Activated CD8-positive, alpha-beta memory T cell treated with anti-CD3 and anti-CD28 coated beads, Interleukin-2, amount 10 ng/mL, durations not matched to agents 7 days and 5 days (primary cell): ENCODE measurements at regions of chr11 and their contacts with region 1.

Region 1: DNA sequence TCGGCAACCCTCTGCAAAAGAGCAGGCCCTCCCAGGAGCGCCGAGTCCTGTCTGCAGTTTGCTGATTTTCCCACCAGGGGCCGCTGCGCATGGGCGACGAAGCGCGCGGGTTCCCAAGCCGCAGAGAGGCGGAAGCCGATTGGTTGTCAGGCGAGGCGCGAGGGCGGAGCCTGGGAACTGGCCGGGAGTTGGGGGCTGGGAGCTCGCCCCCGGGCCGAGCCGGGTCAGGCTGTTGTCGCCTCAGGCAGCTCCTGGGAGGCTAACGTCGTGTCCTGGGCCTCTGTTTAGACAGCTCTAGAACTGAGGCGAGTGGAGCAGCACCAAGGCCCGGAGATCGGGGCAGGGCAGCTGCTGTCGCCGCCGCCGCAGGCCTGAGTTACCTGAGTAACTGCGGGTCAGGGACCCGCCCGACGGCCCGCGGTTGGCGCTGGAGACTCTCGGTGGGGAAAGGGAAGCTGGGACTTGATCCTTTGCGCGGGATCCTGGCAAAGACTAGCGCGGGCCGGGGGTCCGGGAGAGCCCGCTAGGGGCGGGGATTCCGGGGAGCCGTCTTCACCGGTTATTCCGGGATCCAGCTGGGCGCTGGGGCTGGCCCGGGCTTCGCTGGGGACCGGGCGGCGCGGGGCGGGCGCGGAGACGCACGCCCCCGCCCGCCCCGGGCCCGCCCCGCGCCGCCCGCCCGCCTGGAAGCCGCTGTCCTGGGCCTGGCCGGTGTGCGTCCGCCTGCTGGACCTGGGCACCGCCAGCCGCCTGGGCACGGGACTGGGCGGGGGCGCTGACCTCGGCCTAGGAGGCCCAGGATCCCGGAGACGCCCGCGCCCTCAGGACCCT is at the start of gene STIM1:
- DNase-seq: peak; percentile 98
- ATAC-seq: peak; percentile 74
- H3K4me3 Mint-ChIP-seq: peak within 1 kb of the TSS; percentile 86
- H3K27ac Mint-ChIP-seq: peak within 1 kb of the TSS; percentile 97
- H3K4me1 Mint-ChIP-seq: peaks cover 56% of the 10 kb centered on the region
- H3K27me3 Mint-ChIP-seq: no peaks in the 10 kb centered on the region
- total RNA-seq, gene STIM1: 83.5 to 104 TPM

Region 2: GRCh38 chr11:3807909-3808860 is 47.0 kb before region 1 on chr11 and contains the start of gene PGAP2:
- CTCF ChIA-PET with region 1: interaction called, 22 read pairs
- DNase-seq: peak; percentile 69
- ATAC-seq: peak; percentile 87
- H3K4me3 Mint-ChIP-seq: peak within 1 kb of the TSS; percentile 84
- H3K27ac Mint-ChIP-seq: peak within 1 kb of the TSS; percentile 84
- H3K4me1 Mint-ChIP-seq: peaks cover 15% of the 10 kb centered on the region
- H3K27me3 Mint-ChIP-seq: no peaks in the 10 kb centered on the region
- total RNA-seq, gene PGAP2: 22.7 to 23.5 TPM

Region 3: GRCh38 chr11:3879216-3879966 is 24.2 kb after region 1 on chr11:
- CTCF ChIA-PET with region 1: interaction called, 12 read pairs
- DNase-seq: no peak
- ATAC-seq: peak; percentile 59
- H3K4me3 Mint-ChIP-seq: no peak overlapping the region
- H3K27ac Mint-ChIP-seq: peak overlapping the region; percentile 62
- H3K4me1 Mint-ChIP-seq: peaks cover 50% of the 10 kb centered on the region
- H3K27me3 Mint-ChIP-seq: no peaks in the 10 kb centered on the region

Region 4: DNA sequence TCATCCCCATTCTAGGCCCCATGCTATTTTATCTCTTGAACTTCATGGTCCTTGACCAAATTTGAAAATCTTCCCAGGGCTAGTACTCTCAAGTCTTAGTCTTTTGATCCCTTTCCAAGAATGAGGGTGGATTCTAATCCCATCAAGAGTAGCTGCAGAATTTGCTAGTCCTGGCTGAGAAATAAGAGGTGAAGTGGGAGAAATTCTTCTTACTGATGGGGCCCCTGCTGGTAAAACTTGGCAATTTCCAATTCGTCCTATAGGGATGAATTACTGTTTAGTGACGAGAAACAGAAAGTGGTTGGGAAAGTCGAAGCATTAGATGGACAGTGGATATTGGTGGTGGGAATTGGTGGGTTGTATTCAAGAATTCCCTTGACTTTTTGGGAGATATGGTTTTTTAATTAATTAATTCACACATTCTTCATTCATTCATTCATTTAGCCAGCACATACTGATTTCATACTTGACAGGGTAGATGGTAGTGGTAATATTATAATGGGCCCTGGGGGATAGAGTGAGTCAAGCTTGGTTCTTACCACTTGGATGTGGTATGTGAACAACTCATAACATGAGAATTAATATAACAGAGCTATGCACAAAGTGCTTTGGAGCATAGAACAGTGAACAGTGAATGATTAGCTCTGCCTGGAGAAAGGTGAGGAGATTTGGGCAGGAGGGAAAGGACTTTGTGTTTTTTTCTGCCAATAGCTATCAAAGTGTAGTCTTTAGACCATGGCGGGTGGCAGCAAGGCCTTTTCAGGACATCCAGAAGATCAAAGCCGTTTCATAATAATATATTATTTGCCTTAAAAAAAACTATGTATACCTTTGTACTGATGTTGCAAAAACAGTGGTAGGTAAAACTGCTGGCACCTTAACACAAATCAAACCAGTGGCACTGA is 104.1 kb after region 1 on chr11:
- CTCF ChIA-PET with region 1: interaction called, 21 read pairs
- DNase-seq: no peak
- ATAC-seq: peak; percentile 58
- H3K4me3 Mint-ChIP-seq: no peak overlapping the region
- H3K27ac Mint-ChIP-seq: peak overlapping the region; percentile 12
- H3K4me1 Mint-ChIP-seq: peaks cover 64% of the 10 kb centered on the region
- H3K27me3 Mint-ChIP-seq: no peaks in the 10 kb centered on the region

Region 5: GRCh38 chr11:4049006-4049405 is 193.8 kb after region 1 on chr11:
- CTCF ChIA-PET with region 1: interaction called, 11 read pairs
- DNase-seq: no peak
- ATAC-seq: no peak
- H3K4me3 Mint-ChIP-seq: no peak overlapping the region
- H3K27ac Mint-ChIP-seq: no peak overlapping the region
- H3K4me1 Mint-ChIP-seq: peaks cover 6% of the 10 kb centered on the region
- H3K27me3 Mint-ChIP-seq: no peaks in the 10 kb centered on the region

Region 6: DNA sequence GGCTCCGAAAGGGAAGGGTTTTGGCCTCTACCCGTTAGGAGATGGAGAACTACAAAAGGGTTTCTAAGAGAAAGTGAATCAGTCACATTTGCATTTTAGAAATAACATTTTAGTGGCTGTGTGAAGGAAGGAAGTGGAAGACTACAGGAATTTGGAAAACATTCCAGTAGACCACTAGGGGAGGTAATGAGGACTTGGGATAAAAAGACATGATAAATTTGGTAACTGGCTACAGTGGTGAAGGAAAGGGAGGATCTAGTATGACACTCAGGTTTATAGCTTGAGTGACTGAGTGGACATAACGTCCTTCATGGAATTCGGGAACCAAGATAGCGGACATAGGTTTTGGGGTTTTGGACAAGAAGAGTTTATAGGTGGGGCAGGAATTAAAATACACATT is 232.4 kb after region 1 on chr11:
- CTCF ChIA-PET with region 1: interaction called, 15 read pairs
- DNase-seq: no peak
- ATAC-seq: no peak
- H3K4me3 Mint-ChIP-seq: no peak overlapping the region
- H3K27ac Mint-ChIP-seq: no peak overlapping the region
- H3K4me1 Mint-ChIP-seq: peaks cover 50% of the 10 kb centered on the region
- H3K27me3 Mint-ChIP-seq: no peaks in the 10 kb centered on the region